ENCODE measurements at regions of chr5 and their contacts with region 1.

Region 1: GRCh38 chr5:134503088-134503946 is 22.2 kb upstream of the JADE2 start:
- DNase-seq: peak; percentile 53 to 94
- H3K4me3 ChIP-seq: no peak overlapping the region
- H3K27ac ChIP-seq: peak overlapping the region; percentile 67 to 83
- H3K4me1 ChIP-seq: peaks cover 3 to 12% of the 10 kb centered on the region in 2 donors
- H3K27me3 ChIP-seq: no peaks in the 10 kb centered on the region
- CTCF ChIP-seq: no peak

Region 2: GRCh38 chr5:134092878-134093277 is 410.4 kb before region 1 on chr5:
- intact Hi-C with region 1: no loop called
- DNase-seq: no peak
- H3K4me3 ChIP-seq: no peak overlapping the region
- H3K27ac ChIP-seq: no peak overlapping the region
- H3K4me1 ChIP-seq: peaks cover 3 to 16% of the 10 kb centered on the region in 2 donors
- H3K27me3 ChIP-seq: no peaks in the 10 kb centered on the region
- CTCF ChIP-seq: no peak

Region 3: DNA sequence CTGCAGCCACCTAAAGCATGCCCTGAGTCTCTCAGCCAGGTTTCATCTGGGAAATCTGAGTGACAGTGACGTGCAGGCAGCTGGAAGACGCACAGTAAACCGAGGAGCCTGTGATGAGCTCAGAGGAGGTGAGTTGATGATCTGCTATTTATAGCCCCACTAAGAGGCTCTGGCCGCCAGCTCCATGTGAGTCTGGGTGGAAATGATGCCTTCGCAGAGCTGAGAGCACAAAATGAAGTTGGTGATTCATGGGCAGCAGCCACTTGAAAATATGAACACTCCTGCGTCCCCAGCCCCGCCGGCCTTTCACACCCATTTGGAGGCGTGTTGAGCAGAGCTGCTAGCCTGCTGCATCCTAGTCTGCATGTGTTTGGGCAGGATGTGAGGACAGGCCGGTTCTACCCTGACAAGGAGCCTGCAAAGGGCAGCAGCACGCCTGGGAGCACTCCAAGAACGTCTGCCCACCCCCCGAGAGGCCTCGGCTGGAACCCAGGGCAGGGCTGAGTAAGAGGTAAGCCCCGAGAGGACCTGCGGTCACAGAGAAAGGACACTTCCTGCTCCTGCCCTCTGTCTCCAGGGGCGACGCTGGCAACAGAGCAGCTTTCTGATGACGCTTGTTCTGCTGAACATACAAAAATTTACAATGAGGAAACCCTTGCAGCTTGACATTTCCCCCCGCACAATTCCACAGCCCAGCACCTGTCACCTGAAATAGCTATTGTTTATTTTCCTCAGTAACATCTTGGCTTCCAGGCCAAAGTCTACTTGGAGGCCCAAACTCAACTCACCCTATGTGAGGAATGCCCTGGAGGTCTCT is 66.6 kb before region 1 on chr5:
- intact Hi-C with region 1: loop called (anchors 5 kb)
- DNase-seq: peak; percentile 27 to 77
- H3K4me3 ChIP-seq: peak overlapping the region in 1 of 2 donors; percentile 31
- H3K27ac ChIP-seq: peak overlapping the region; percentile 17 to 19
- H3K4me1 ChIP-seq: peaks cover 0 to 12% of the 10 kb centered on the region in 2 donors
- H3K27me3 ChIP-seq: no peaks in the 10 kb centered on the region
- CTCF ChIP-seq: no peak

Region 4: DNA sequence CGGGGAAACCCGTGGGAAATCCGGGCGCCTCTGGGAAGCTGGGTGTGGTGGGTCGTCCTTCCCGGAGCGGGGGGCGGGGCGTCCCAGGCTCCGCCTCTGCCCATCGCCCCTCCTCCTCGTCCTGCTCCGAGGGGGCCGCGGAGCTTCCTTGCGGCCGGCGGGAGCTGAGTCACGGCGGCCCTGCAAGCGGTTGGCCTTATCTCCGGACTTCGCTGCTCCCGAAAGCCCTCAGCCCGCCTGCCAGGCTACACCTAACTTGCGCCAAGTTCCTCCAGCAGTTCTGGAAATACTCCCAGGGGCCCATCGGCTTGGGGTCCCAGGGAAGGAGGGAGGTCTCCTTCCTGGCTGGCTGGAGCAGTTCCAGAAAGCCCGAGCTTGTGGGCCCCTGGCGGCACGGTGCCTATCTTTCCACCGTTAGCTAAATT is 37.5 kb before region 1 on chr5:
- intact Hi-C with region 1: loop called (anchors 2 kb)
- DNase-seq: peak; percentile 52 to 94
- H3K4me3 ChIP-seq: peak overlapping the region; percentile 64 to 68
- H3K27ac ChIP-seq: peak overlapping the region; percentile 94 to 98
- H3K4me1 ChIP-seq: peaks cover 6 to 22% of the 10 kb centered on the region in 2 donors
- H3K27me3 ChIP-seq: no peaks in the 10 kb centered on the region
- CTCF ChIP-seq: no peak

Region 5: GRCh38 chr5:135072387-135073281 is 569.3 kb after region 1 on chr5:
- intact Hi-C with region 1: no loop called
- DNase-seq: peak in 1 of 2 donors; percentile 42
- H3K4me3 ChIP-seq: no peak overlapping the region
- H3K27ac ChIP-seq: no peak overlapping the region
- H3K4me1 ChIP-seq: no peaks in the 10 kb centered on the region
- H3K27me3 ChIP-seq: no peaks in the 10 kb centered on the region
- CTCF ChIP-seq: no peak